ENCODE measurements at regions of chr5 and their contacts with region 1.

Region 1: GRCh38 chr5:169583424-169584204 is at the start of gene SPDL1:
- DNase-seq: peak; percentile 93 to 95 (median 94)
- H3K4me3 ChIP-seq: peak within 1 kb of the TSS; percentile 63 to 82
- H3K4me3 Mint-ChIP-seq: peak within 1 kb of the TSS; percentile 96 to 100 (median 99)
- H3K27ac ChIP-seq: peak within 1 kb of the TSS; percentile 76
- H3K27ac Mint-ChIP-seq: peak within 1 kb of the TSS; percentile 95 to 97 (median 96)
- H3K4me1 ChIP-seq: peaks cover 16% of the 10 kb centered on the region
- H3K4me1 Mint-ChIP-seq: peaks cover 20 to 47% (median 30%) of the 10 kb centered on the region in 4 donors
- H3K27me3 ChIP-seq: no peaks in the 10 kb centered on the region
- H3K27me3 Mint-ChIP-seq: no peaks in the 10 kb centered on the region
- total RNA-seq, gene SPDL1: 12.0 to 12.2 TPM

Region 2: GRCh38 chr5:168268949-168269943 is 1314.4 kb before region 1 on chr5:
- CTCF ChIA-PET with region 1: interaction called, 4 read pairs
- POLR2A ChIA-PET with region 1: no interaction called
- intact Hi-C with region 1: loop called (anchors 1 kb)
- DNase-seq: peak; percentile 52 to 70 (median 62)
- H3K4me3 ChIP-seq: peak overlapping the region in 1 of 2 donors; percentile 42
- H3K4me3 Mint-ChIP-seq: peak overlapping the region; percentile 53 to 79 (median 64)
- H3K27ac ChIP-seq: no peak overlapping the region
- H3K27ac Mint-ChIP-seq: no peak overlapping the region
- H3K4me1 ChIP-seq: peaks cover 10% of the 10 kb centered on the region
- H3K4me1 Mint-ChIP-seq: peaks cover 7 to 14% (median 11%) of the 10 kb centered on the region in 4 donors
- H3K27me3 ChIP-seq: no peaks in the 10 kb centered on the region
- H3K27me3 Mint-ChIP-seq: peaks cover 2 to 19% of the 10 kb centered on the region in 2 donors

Region 3: DNA sequence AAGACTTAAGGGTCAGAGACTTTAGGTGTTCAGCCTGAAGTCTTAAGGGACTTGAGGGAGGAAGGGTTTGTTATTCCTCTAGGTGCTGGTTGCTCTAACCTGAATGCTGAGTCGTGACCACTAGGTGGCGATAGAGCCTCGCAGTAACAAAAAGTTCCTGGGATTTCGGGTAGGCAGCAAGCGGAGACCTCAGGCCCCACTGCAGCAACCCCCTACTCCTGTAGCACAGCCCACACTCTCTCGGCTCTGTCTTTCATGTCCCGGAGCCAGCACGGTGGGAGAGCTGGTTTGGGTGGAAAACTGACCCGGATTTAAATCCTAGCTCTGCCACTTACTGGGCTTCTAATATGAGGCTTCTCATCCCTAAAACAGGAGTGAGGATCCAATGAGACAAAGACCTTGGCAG is 904.1 kb before region 1 on chr5:
- CTCF ChIA-PET with region 1: interaction called, 19 read pairs
- POLR2A ChIA-PET with region 1: no interaction called
- intact Hi-C with region 1: loop called (anchors 1 kb)
- DNase-seq: peak in 4 of 5 donors; percentile 25 to 36 (median 32)
- H3K4me3 ChIP-seq: no peak overlapping the region
- H3K4me3 Mint-ChIP-seq: no peak overlapping the region
- H3K27ac ChIP-seq: no peak overlapping the region
- H3K27ac Mint-ChIP-seq: no peak overlapping the region
- H3K4me1 ChIP-seq: peaks cover 8% of the 10 kb centered on the region
- H3K4me1 Mint-ChIP-seq: peaks cover 3 to 10% (median 6%) of the 10 kb centered on the region in 4 donors
- H3K27me3 ChIP-seq: no peaks in the 10 kb centered on the region
- H3K27me3 Mint-ChIP-seq: peaks cover 0 to 2% of the 10 kb centered on the region in 2 donors

Region 4: DNA sequence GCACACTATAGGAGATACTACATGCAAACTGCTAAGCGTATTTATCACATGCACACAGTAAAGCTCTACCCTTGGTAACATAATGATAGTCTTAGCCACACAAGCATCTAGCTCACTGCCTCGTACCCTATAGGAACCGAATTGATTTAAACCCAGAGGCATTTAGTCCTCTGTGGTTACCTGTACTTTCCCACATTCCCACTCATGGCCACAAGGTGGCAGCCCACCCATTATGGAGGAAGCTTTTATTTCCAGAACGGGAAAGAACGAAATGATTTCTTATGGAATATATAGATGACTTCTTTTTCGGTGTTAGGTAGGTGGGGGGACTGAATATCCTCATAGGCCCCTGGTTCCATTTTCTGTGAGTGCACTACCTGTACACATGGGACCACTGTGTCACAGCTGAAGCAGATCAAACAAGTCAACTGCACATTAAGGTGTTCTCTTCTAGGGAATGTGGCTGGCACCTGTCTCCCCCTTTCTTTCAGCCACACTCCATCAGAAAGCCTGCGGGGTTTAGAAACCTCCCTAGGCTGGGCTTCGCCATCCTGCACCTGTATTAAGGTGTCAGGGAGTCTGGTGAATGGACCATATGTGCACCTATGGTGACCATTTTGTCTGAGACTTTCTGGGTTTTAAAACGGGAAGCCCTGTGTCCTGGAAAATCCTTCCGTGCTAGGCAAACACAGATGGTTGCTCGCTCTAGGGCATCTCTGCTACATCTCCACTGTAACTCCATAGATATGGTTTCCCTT is 595.9 kb before region 1 on chr5:
- CTCF ChIA-PET with region 1: interaction called, 34 read pairs
- POLR2A ChIA-PET with region 1: no interaction called
- intact Hi-C with region 1: no loop called
- DNase-seq: peak in 4 of 5 donors; percentile 18 to 43 (median 26)
- H3K4me3 ChIP-seq: no peak overlapping the region
- H3K4me3 Mint-ChIP-seq: no peak overlapping the region
- H3K27ac ChIP-seq: no peak overlapping the region
- H3K27ac Mint-ChIP-seq: no peak overlapping the region
- H3K4me1 ChIP-seq: no peaks in the 10 kb centered on the region
- H3K4me1 Mint-ChIP-seq: peaks cover 0 to 4% (median under 1%) of the 10 kb centered on the region in 4 donors
- H3K27me3 ChIP-seq: no peaks in the 10 kb centered on the region
- H3K27me3 Mint-ChIP-seq: peaks cover 3 to 15% of the 10 kb centered on the region in 2 donors

Region 5: DNA sequence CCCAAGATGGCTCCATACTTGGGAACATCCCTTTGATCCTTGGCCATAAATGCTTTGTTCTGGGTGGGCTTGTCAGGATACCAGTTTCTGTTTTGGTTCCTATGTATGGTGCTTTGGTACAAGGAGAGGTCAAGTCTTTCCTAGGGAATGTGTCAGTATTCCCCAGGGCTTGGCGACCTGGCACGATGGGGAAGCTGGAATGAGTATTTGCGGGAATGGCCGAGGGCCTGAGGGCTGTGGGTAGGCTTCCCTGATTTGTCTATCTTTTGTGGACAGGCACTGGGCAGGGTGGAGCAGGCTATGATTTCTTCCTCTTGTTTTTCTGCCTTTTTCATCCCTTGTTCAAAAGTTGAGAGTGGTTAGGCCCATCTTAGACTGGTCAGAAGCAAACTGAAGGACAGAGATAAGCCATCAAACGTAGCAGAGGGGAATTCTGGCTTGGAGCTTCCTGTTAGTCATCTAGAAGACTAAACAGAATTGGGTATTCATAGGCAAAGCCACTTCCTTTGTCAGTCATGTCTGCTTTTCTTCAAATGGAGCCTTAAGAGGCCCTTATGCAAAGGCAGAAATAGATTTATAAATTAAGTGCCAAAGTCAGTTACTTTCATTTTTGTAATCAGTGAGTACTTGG is 67.2 kb after region 1 on chr5:
- CTCF ChIA-PET with region 1: no interaction called
- POLR2A ChIA-PET with region 1: interaction called, 3 read pairs
- intact Hi-C with region 1: loop called (anchors 5 kb)
- DNase-seq: peak in 3 of 5 donors; percentile 13 to 70 (median 28)
- H3K4me3 ChIP-seq: peak overlapping the region in 1 of 2 donors; percentile 2
- H3K4me3 Mint-ChIP-seq: peak overlapping the region; percentile 55 to 85 (median 74)
- H3K27ac ChIP-seq: peak overlapping the region; percentile 54
- H3K27ac Mint-ChIP-seq: peak overlapping the region; percentile 89 to 98 (median 93)
- H3K4me1 ChIP-seq: peaks cover 99% of the 10 kb centered on the region
- H3K4me1 Mint-ChIP-seq: peaks cover 89 to 100% (median 96%) of the 10 kb centered on the region in 4 donors
- H3K27me3 ChIP-seq: no peaks in the 10 kb centered on the region
- H3K27me3 Mint-ChIP-seq: no peaks in the 10 kb centered on the region

Measured in CD4-positive, alpha-beta memory T cell (primary cell).